GM12878 (cell line): ENCODE measurements at regions of chr4 and their contacts with region 1.

Region 1: GRCh38 chr4:155953151-155954114 is at the start of gene CTSO:
- DNase-seq: peak; percentile 48
- ATAC-seq: peak; percentile 96
- H3K4me3 ChIP-seq: peak within 1 kb of the TSS; percentile 77
- H3K27ac ChIP-seq: peak within 1 kb of the TSS; percentile 89
- H3K4me1 ChIP-seq: no peaks in the 10 kb centered on the region
- H3K27me3 ChIP-seq: no peaks in the 10 kb centered on the region
- CTCF ChIP-seq: peak; percentile 46 to 69 (median 53); a peak in 5 of 6 replicates
- EP300 ChIP-seq: no peak
- POLR2A ChIP-seq: peak; percentile 94
- RAD21 ChIP-seq: peak; percentile 65
- polyA plus RNA-seq, gene CTSO: 3.9 to 4.6 TPM

Region 2: GRCh38 chr4:155442267-155443105 is 510.9 kb before region 1 on chr4:
- CTCF ChIA-PET with region 1: interaction called, 26 read pairs
- POLR2A ChIA-PET with region 1: no interaction called
- RAD21 ChIA-PET with region 1: interaction called, 12 read pairs
- SMC1A ChIA-PET with region 1: interaction called, 20 read pairs
- in situ Hi-C with region 1: no loop called
- intact Hi-C with region 1: loop called (anchors 1 kb)
- DNase-seq: no peak
- ATAC-seq: peak; percentile 89
- H3K4me3 ChIP-seq: no peak overlapping the region
- H3K27ac ChIP-seq: no peak overlapping the region
- H3K4me1 ChIP-seq: no peaks in the 10 kb centered on the region
- H3K27me3 ChIP-seq: no peaks in the 10 kb centered on the region; a peak in 1 of 4 replicates
- CTCF ChIP-seq: peak; percentile 83 to 87 (median 87)
- EP300 ChIP-seq: no peak
- POLR2A ChIP-seq: no peak
- RAD21 ChIP-seq: peak; percentile 85

Region 3: DNA sequence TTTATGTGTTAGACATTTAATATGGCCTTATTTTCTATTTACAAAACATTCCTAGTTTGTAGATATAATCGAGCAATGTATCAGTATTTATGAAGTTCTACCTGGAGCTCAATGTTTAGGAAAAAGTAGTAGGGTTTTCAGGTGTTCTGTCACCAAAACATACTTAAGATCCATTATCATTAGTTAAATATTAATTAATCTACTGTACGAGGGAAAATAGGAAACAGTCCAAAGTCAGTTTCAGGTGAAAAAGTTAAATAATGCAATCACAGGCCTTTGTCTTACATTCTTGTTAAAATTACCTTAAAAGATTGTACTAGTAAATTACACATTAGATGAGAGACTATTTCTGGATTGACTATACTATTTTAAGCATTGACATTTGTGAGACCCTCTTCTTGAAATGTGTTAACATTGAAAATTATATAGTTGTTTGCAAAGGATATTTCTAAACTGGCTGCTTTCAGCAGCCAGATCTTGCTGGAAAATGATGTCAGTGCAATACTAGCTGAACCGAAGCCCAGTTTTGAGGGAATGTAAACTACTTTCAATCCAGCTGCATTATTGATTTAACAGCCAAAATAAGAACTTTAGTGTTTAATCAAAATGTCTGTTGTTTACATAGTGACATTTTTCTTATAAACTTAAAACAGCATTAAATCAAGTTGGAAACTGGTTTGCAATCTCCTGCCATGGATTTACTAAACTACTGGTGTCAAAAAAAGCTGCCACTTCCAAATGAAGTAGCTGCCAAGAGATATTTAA is 175.3 kb before region 1 on chr4:
- CTCF ChIA-PET with region 1: interaction called, 10 read pairs
- POLR2A ChIA-PET with region 1: no interaction called
- RAD21 ChIA-PET with region 1: no interaction called
- SMC1A ChIA-PET with region 1: interaction called, 4 read pairs
- in situ Hi-C with region 1: no loop called
- intact Hi-C with region 1: no loop called
- DNase-seq: no peak
- ATAC-seq: no peak
- H3K4me3 ChIP-seq: no peak overlapping the region
- H3K27ac ChIP-seq: no peak overlapping the region
- H3K4me1 ChIP-seq: no peaks in the 10 kb centered on the region
- H3K27me3 ChIP-seq: no peaks in the 10 kb centered on the region
- CTCF ChIP-seq: no peak
- EP300 ChIP-seq: no peak
- POLR2A ChIP-seq: no peak
- RAD21 ChIP-seq: no peak

Region 4: DNA sequence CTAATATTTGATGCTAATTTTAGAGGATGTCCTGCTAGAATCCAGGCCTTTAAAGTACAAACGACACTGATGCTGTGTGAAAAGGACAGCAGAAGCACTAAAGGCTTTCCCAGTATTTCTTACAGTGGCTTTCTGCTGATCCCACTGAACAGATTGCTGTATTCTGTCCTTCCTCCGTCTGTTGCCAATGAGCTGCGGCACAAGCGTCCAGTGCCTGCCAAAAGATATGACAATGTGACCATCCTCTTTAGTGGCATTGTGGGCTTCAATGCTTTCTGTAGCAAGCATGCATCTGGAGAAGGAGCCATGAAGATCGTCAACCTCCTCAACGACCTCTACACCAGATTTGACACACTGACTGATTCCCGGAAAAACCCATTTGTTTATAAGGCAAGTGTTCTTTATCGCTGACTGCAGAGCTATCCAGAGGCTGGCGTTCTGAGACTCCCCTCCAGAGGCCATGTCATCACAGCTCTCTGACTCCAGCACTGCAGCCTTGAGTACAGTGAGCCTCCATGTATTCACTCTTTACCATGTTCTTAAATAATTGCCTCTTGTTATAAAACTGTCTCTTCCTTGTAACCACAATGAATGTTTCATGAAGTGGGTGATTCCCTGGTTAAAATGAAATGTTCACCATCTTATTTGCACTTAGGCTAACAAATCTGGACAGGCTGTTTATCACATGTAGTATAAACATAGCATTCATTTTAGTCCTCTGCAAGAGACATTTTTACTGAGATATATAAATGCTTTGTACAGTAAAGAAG is 151.1 kb before region 1 on chr4:
- CTCF ChIA-PET with region 1: interaction called, 186 read pairs
- POLR2A ChIA-PET with region 1: interaction called, 6 read pairs
- RAD21 ChIA-PET with region 1: interaction called, 113 read pairs
- SMC1A ChIA-PET with region 1: interaction called, 19 read pairs
- in situ Hi-C with region 1: loop called (anchors 5 kb)
- intact Hi-C with region 1: no loop called
- DNase-seq: no peak
- ATAC-seq: no peak
- H3K4me3 ChIP-seq: no peak overlapping the region
- H3K27ac ChIP-seq: no peak overlapping the region
- H3K4me1 ChIP-seq: no peaks in the 10 kb centered on the region
- H3K27me3 ChIP-seq: no peaks in the 10 kb centered on the region
- CTCF ChIP-seq: no peak
- EP300 ChIP-seq: no peak
- POLR2A ChIP-seq: no peak
- RAD21 ChIP-seq: no peak

Region 5: GRCh38 chr4:155881555-155881954 is 71.9 kb before region 1 on chr4:
- CTCF ChIA-PET with region 1: interaction called, 4 read pairs
- POLR2A ChIA-PET with region 1: interaction called, 4 read pairs
- RAD21 ChIA-PET with region 1: interaction called, 14 read pairs
- SMC1A ChIA-PET with region 1: interaction called, 7 read pairs
- in situ Hi-C with region 1: no loop called
- intact Hi-C with region 1: no loop called
- DNase-seq: peak; percentile 30
- ATAC-seq: peak; percentile 76
- H3K4me3 ChIP-seq: no peak overlapping the region
- H3K27ac ChIP-seq: no peak overlapping the region
- H3K4me1 ChIP-seq: no peaks in the 10 kb centered on the region
- H3K27me3 ChIP-seq: no peaks in the 10 kb centered on the region
- CTCF ChIP-seq: no peak
- EP300 ChIP-seq: no peak
- POLR2A ChIP-seq: no peak
- RAD21 ChIP-seq: no peak

Region 6: DNA sequence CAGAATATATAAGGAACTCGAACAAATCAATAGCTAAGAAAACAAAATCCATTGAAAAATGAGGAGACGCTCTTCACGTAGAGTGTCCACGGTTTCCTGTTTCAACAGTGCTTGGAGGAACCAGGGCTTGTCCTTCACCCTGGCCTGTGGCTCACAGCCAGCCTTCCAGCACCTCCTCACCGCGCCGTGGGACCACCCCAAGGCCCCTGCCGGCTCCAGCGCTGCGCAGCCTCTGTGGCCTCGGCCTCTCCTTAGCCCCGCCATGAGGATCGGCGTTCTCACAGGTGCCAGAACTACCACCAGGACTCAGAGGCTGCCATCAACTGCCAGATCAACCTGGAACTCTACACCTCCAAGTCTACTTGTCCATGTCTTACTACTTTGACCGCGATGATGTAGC is 52.8 kb after region 1 on chr4:
- CTCF ChIA-PET with region 1: no interaction called
- POLR2A ChIA-PET with region 1: no interaction called
- RAD21 ChIA-PET with region 1: no interaction called
- SMC1A ChIA-PET with region 1: no interaction called
- in situ Hi-C with region 1: no loop called
- intact Hi-C with region 1: no loop called
- DNase-seq: no peak
- ATAC-seq: no peak
- H3K4me3 ChIP-seq: no peak overlapping the region
- H3K27ac ChIP-seq: no peak overlapping the region
- H3K4me1 ChIP-seq: no peaks in the 10 kb centered on the region
- H3K27me3 ChIP-seq: no peaks in the 10 kb centered on the region
- CTCF ChIP-seq: no peak
- EP300 ChIP-seq: no peak
- POLR2A ChIP-seq: no peak
- RAD21 ChIP-seq: no peak

Region 7: DNA sequence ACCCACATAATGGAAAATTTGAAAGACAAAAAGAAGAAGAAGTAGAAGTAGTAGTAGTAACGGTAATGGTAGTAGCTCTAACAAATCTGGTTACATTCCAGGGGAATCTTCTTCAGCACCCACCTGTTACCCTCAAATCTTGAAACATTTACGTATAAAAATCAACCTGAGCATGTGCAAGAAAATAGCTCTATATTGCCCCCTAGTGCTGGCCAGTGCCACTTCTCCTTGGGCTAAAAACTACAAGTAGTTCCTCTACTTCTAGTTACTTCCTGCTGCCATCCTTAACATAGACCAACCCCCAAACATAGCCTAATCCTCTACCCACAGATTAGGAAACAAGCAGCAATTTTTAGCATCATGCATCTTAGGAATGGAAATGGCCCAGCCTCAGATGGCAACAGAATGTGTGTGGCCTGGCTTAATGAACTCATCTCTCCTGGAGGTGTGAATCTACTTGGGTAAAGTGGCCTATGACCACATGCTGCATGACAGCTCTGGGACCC is 1015.1 kb after region 1 on chr4:
- CTCF ChIA-PET with region 1: no interaction called
- POLR2A ChIA-PET with region 1: no interaction called
- RAD21 ChIA-PET with region 1: no interaction called
- SMC1A ChIA-PET with region 1: no interaction called
- in situ Hi-C with region 1: no loop called
- intact Hi-C with region 1: loop called (anchors 10 kb)
- DNase-seq: no peak
- ATAC-seq: peak; percentile 93
- H3K4me3 ChIP-seq: no peak overlapping the region
- H3K27ac ChIP-seq: no peak overlapping the region
- H3K4me1 ChIP-seq: no peaks in the 10 kb centered on the region
- H3K27me3 ChIP-seq: peaks cover 4 to 18% of the 10 kb centered on the region in 2 experiments
- CTCF ChIP-seq: peak; percentile 73 to 76 (median 74)
- EP300 ChIP-seq: no peak
- POLR2A ChIP-seq: no peak
- RAD21 ChIP-seq: peak; percentile 74